PC-3 (cell line): ENCODE measurements at regions of chr12 and their contacts with region 1.

Region 1: DNA sequence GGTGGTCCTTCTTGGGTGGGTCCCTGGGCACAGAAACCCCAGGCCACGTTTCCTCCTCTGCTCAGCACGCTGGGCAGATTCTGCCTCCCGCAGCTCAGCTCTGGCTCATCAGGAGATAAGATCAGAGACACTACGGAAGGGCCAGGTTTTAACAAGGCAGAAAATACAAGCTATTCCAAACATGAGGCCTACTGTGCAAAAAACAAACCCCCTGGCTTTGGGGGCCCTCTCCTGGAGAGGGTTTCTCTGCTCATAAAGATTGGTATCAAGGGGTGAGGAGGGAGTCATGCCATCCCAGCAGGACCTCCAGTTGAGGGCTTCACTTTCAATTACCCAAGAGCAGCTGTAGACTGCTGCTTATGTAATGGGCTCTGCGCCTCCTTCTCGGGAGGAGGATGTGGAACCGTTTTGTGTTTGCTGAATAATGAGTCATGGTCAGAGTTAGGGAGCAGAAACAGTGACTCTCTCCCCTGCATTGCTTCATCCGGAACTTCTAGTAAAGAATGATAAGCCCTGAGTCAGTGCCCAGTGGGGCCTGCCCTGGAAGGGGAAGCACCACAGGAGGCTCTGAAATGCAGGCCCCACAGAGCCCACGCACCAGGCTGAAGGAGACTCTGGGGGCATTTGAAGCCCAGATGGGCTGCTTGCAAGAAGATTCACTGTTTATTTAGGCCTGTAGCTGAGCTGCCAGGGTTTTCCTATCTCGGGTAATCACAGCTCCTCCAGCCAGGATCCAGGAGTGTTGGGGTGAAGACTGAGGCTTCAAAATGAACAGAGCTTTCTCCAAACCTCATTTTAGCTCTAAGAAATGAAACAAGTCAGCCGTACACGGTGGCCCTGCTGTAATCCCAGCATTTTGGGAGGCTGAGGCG is 79.3 kb downstream of the SSPN start:
- DNase-seq: peak; percentile 100
- ATAC-seq: peak; percentile 92
- H3K4me3 ChIP-seq: peak overlapping the region; percentile 5; the same call in 1 of the 2 replicates
- H3K27ac ChIP-seq: peak overlapping the region; percentile 94
- H3K4me1 ChIP-seq: peaks cover 57% of the 10 kb centered on the region
- H3K27me3 ChIP-seq: no peaks in the 10 kb centered on the region
- CTCF ChIP-seq: peak; percentile 83

Region 2: GRCh38 chr12:26119391-26119981 is 155.2 kb before region 1 on chr12:
- CTCF ChIA-PET with region 1: interaction called, 19 read pairs
- POLR2A ChIA-PET with region 1: interaction called, 42 read pairs
- intact Hi-C with region 1: no loop called
- DNase-seq: peak; percentile 88
- ATAC-seq: peak; percentile 23
- H3K4me3 ChIP-seq: peak overlapping the region; percentile 77
- H3K27ac ChIP-seq: peak overlapping the region; percentile 74
- H3K4me1 ChIP-seq: peaks cover 54% of the 10 kb centered on the region
- H3K27me3 ChIP-seq: no peaks in the 10 kb centered on the region
- CTCF ChIP-seq: peak; percentile 94

Region 3: DNA sequence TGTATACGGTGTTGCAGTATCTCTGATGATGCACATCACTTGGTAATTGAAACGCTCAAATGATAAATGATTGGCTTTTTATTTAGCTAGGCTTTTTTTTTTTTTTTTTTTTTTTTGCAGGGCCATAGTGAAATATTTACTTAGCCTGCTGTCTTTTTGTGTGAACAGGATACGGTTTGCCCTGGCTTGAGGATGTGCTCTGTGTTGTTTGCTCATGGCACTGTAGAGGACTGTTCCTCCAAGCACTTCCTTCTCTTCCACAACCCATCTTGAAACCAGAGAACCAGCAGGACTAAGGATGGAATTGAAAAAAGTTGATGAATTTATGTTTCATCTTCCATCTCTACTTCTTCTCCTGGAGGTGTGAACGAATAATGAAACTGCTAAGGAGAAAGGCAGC is 94.8 kb before region 1 on chr12:
- CTCF ChIA-PET with region 1: no interaction called
- POLR2A ChIA-PET with region 1: interaction called, 15 read pairs
- intact Hi-C with region 1: loop called (anchors 1 kb)
- DNase-seq: no peak
- ATAC-seq: 0 out of 2 replicates have a peak, but pooled peaks have one; percentile 19
- H3K4me3 ChIP-seq: no peak overlapping the region
- H3K27ac ChIP-seq: no peak overlapping the region
- H3K4me1 ChIP-seq: peaks cover 8% of the 10 kb centered on the region; the same call in 1 of the 2 replicates
- H3K27me3 ChIP-seq: no peaks in the 10 kb centered on the region
- CTCF ChIP-seq: no peak

Region 4: DNA sequence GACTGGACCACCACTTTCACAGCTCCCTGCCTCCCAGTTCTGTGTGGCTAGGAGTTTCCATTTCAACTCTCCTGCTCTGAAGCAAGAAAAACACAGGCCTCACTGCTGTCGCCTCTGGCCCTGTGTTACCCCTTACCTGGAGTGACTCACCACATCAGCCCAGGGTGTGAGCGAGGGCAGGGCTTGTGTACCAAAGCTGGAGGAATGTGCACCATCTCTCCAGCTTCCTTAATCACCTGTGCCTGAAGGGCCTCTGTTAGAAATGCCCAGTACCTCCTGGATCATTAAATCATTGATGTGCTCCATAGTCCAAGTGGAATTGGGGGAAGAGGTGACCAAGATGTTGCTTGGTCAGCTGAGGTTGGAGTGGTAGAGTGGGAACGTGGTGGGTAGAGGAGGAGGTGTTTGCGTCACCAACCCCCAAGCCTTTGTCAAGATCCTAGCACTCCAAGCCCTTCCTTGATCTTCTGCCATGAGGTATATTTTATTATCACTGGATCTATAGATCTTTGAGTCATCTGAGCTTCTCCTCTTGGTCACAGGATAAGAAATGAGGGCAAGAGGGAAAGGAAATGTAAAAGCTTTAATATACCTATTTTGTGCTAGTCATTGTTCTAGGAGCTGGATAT is 28.1 kb before region 1 on chr12:
- CTCF ChIA-PET with region 1: interaction called, 14 read pairs
- POLR2A ChIA-PET with region 1: interaction called, 9 read pairs
- intact Hi-C with region 1: loop called (anchors 1 kb)
- DNase-seq: peak; percentile 99
- ATAC-seq: peak; percentile 94
- H3K4me3 ChIP-seq: peak overlapping the region; percentile 23; the same call in 1 of the 2 replicates
- H3K27ac ChIP-seq: peak overlapping the region; percentile 94
- H3K4me1 ChIP-seq: peaks cover 56% of the 10 kb centered on the region
- H3K27me3 ChIP-seq: no peaks in the 10 kb centered on the region
- CTCF ChIP-seq: no peak

Region 5: DNA sequence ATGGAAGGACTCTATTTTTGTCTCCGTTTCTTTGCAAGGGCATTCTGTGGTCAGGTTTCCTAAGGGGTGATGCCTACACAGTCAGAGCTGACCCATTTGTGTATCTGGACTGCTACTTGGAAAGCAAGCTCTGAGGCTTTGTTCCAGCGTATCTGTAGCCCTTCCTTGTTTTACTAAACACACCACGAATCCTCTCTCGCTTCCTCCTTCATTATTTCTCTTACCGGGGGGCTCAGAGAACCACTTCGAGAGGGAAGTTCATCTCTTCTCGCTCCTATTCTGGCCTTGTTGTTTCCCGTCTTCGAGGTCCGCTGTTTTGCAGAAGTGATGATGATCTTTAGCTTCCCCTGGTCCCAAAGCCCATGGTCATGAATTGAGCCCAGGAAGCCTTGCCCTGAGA is 85.4 kb after region 1 on chr12:
- CTCF ChIA-PET with region 1: no interaction called
- POLR2A ChIA-PET with region 1: no interaction called
- intact Hi-C with region 1: no loop called
- DNase-seq: no peak
- ATAC-seq: no peak
- H3K4me3 ChIP-seq: no peak overlapping the region
- H3K27ac ChIP-seq: no peak overlapping the region
- H3K4me1 ChIP-seq: no peaks in the 10 kb centered on the region
- H3K27me3 ChIP-seq: no peaks in the 10 kb centered on the region
- CTCF ChIP-seq: no peak

Region 6: GRCh38 chr12:26416550-26416949 is 141.9 kb after region 1 on chr12:
- CTCF ChIA-PET with region 1: no interaction called
- POLR2A ChIA-PET with region 1: no interaction called
- intact Hi-C with region 1: loop called (anchors 1 kb)
- DNase-seq: peak; percentile 32
- ATAC-seq: peak; percentile 82
- H3K4me3 ChIP-seq: no peak overlapping the region
- H3K27ac ChIP-seq: no peak overlapping the region
- H3K4me1 ChIP-seq: 0 out of 2 replicates have a peak, but pooled peaks cover 5% of the 10 kb centered on the region
- H3K27me3 ChIP-seq: no peaks in the 10 kb centered on the region
- CTCF ChIP-seq: no peak

Region 7: DNA sequence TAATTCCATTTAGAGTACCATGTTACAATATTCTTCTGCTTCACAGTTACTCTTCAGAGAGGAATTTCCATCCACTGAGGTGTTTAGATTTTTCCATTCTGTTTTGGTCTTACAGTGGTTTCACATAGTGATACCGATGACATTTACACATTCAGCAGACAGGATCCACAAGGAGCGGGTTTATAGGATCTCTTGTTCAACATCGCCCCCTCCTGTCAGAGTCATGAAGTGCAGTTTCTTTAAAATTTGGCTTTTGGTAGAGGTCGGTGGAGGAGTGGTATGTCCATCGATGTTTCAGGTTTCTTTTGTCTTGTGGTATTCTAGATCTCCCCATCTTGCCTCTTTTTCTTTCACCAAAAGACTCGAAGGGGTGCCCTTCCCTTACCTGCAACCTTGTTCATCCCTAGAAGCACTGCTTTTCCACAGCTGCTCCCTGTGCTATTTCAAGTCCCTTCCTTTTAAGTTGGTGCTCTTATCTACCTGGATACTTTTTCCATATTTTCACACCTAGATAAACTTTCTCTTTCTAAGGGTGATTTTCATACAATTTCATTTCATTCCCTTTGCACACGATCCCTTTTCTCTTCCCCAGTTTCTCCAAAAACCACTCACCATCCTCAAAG is 377.0 kb after region 1 on chr12:
- CTCF ChIA-PET with region 1: no interaction called
- POLR2A ChIA-PET with region 1: no interaction called
- intact Hi-C with region 1: loop called (anchors 1 kb)
- DNase-seq: peak; percentile 97
- ATAC-seq: peak; percentile 85
- H3K4me3 ChIP-seq: no peak overlapping the region
- H3K27ac ChIP-seq: no peak overlapping the region
- H3K4me1 ChIP-seq: peaks cover 22% of the 10 kb centered on the region
- H3K27me3 ChIP-seq: no peaks in the 10 kb centered on the region
- CTCF ChIP-seq: peak; percentile 99